ENCODE measurements at regions of chr1 and their contacts with region 1.

Region 1: DNA sequence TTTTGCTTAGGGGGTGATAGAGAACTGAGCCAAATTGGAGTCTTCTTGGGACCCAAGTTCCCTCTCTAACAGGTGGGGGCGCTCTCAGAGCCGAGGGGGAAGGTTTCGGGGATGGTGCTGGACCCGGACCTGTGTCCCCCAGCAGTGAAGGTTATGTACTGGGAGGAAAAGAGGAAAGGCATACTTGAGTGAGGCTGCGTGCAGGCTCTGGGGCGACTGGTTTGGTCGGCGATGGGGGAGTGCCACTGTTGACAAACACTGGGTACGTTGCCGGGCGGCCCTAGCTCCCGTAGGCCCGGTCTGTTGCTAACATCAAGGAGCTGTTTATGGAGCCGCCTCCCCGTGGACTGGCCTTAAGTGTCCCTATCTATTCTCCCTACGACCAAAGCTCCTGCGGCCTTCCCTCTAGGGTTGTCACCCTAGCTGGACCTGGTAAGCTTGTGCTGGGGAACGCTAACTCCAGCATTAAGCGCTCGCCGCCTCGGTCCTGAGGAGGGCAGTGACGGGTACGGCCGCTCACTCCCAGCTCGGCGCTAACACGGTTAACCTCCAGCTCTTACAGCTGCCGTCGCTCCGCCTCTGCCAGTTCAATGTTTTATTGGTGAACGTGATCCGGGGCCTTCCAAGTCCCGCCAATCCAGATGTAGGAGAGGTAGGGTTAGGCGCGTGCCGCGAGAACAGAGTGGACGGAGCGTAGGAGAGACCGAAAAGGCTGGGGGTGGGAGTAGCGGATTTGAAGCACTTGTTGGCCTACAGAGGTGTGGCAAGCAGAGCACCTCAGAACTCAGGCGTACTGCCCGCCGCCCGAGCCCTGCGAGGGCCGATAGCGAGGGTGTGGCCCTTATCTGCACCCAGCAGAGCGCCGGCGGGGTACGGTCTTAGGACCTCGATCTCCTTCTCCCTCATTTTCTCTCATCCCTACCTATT is at the start of gene PPOX:
- DNase-seq: peak; percentile 96
- H3K4me3 Mint-ChIP-seq: peak within 1 kb of the TSS; percentile 88
- H3K27ac Mint-ChIP-seq: peak within 1 kb of the TSS; percentile 94
- H3K4me1 Mint-ChIP-seq: peaks cover 49% of the 10 kb centered on the region
- H3K27me3 Mint-ChIP-seq: no peaks in the 10 kb centered on the region
- total RNA-seq, gene PPOX: 32.9 to 33.2 TPM

Region 2: DNA sequence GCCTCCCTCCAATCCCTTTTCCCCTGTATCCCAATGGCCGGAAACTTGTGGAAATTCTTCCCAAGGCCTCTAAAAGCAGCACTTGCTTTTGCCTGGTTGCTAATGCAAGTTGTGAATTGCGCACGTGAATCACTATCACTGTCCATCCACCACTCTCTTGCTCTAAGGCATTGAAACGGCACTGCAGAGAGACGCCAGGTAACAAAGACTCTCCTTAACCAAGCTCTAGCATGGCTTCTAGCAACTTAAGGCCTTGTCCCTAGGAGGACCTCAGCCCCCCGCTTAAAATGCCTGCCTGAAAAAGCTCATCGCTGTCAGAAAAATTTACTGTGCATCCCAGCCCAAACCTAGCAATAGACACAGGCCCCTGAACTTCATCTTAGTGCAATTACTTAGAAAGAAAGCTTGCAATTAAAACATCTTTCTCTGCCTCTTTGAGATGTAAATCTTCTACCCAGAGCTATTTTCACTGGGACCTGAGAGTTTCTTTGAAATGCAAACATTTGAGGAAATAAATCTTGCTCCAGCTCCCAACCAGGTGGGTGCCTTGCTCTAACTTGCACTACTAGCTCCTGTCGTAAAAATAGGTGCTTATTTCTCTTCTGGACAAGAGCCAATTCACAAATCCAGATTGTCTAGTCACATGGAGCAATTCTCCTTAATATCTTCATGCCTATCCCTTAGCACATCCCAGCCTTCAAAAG is 178.5 kb before region 1 on chr1:
- CTCF ChIA-PET with region 1: no interaction called
- POLR2A ChIA-PET with region 1: no interaction called
- DNase-seq: no peak
- H3K4me3 Mint-ChIP-seq: no peak overlapping the region
- H3K27ac Mint-ChIP-seq: no peak overlapping the region
- H3K4me1 Mint-ChIP-seq: peaks cover 7% of the 10 kb centered on the region
- H3K27me3 Mint-ChIP-seq: peaks cover 12% of the 10 kb centered on the region

Region 3: DNA sequence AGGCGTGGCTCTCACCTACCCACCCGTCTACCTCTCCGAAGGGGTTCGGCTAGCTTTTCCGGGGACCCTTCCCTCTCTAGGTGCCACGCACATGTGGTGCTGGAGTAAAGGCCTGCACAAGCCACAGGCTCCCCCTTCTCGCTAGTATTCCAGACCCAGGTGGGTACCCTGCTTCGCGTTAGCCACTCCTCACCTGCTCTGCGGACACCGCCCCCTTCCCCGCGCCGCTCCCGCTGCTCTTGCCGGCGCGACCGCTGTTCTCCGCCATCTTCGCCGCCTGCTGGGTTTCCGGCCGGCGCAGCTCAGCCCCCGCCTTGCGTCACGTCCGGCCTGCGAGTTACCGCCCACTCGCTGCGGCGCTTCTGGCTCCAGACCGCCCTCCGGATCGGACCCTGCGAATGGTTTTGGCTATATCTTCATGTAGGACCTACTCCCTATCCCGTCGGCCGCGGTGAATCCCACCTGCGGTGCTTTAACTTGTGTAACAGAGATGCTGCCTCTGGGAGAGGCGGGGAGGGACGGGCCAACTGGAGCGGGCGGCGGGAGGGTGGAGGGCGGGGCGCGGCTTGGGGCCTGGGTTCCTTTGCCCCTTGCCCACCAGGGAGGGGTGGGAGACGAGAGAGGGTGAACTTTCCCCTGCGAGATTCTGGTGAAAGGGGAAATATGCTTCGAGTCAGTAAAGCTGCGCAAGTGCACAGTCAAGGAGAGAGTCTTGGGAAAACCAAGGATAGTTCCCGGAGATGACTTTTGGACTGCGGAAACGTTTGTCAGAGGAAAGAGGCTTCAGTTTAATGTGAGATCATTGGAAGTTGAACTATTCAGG is 48.0 kb before region 1 on chr1 and contains the starts of genes NIT1 and PFDN2:
- CTCF ChIA-PET with region 1: interaction called, 3 read pairs
- POLR2A ChIA-PET with region 1: interaction called, 12 read pairs
- DNase-seq: peak; percentile 89
- H3K4me3 Mint-ChIP-seq: peak within 1 kb of the TSS; percentile 93
- H3K27ac Mint-ChIP-seq: peak within 1 kb of the TSS; percentile 95
- H3K4me1 Mint-ChIP-seq: peaks cover 66% of the 10 kb centered on the region
- H3K27me3 Mint-ChIP-seq: no peaks in the 10 kb centered on the region
- total RNA-seq, gene NIT1: 50.8 to 51.5 TPM
- total RNA-seq, gene PFDN2: 76.6 to 78.8 TPM

Region 4: GRCh38 chr1:161177112-161177935 is 11.3 kb after region 1 on chr1 and contains the start of gene B4GALT3:
- CTCF ChIA-PET with region 1: interaction called, 69 read pairs
- POLR2A ChIA-PET with region 1: interaction called, 69 read pairs
- DNase-seq: peak; percentile 94
- H3K4me3 Mint-ChIP-seq: peak within 1 kb of the TSS; percentile 97
- H3K27ac Mint-ChIP-seq: peak within 1 kb of the TSS; percentile 96
- H3K4me1 Mint-ChIP-seq: peaks cover 78% of the 10 kb centered on the region
- H3K27me3 Mint-ChIP-seq: no peaks in the 10 kb centered on the region
- total RNA-seq, gene B4GALT3: 55.0 to 56.7 TPM

Region 5: DNA sequence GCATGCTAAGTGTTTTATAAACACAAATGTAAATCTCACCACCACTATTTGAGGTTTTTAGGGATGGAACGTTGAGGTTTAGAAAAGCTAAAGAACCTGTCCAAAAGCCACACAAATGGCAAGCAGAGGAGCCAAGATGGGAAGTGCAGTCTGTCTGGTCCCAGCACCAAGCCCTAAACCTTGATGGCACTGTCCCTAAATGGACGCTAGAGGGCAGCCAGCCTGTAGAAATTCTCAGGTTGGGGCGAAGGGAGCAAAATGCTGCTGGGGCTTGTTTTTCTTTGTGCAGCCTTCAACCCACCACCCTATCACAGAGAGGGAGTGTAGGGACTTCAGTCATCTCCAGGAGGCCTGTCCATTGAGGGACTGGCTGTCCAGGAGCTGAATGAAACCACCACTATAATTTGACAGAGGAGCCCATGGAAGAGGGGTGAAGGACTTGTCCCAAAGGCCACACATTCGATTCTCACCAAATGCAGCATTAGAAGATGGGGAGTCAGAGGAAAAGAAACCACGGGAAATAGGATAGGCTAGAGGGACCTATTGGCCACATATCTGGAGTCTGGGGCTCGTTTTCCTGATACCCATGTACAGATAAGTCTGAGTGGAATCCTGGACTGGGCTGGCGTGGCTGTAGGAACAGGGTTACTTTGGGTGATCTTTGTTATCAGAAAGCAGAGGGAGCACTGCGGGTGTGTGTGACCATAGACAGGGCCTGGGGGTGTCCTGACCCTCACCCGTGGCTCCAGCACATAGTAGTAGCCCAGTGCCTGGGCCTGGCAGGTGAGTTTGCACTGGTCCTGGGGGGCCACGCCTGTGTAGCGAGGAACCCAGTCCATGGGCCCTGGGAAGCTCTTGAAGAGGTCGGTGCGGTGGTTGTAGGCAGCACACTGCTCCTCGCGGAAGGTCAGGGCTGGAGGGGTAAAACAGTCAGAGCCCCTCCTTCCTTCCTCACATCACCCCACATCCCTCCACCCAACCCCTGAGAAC is 26.8 kb after region 1 on chr1:
- CTCF ChIA-PET with region 1: interaction called, 19 read pairs
- POLR2A ChIA-PET with region 1: interaction called, 7 read pairs
- DNase-seq: peak; percentile 77
- H3K4me3 Mint-ChIP-seq: no peak overlapping the region
- H3K27ac Mint-ChIP-seq: peak overlapping the region; percentile 56
- H3K4me1 Mint-ChIP-seq: peaks cover 53% of the 10 kb centered on the region
- H3K27me3 Mint-ChIP-seq: no peaks in the 10 kb centered on the region

Region 6: GRCh38 chr1:161250829-161251228 is 84.8 kb after region 1 on chr1:
- CTCF ChIA-PET with region 1: no interaction called
- POLR2A ChIA-PET with region 1: no interaction called
- DNase-seq: no peak
- H3K4me3 Mint-ChIP-seq: no peak overlapping the region
- H3K27ac Mint-ChIP-seq: no peak overlapping the region
- H3K4me1 Mint-ChIP-seq: no peaks in the 10 kb centered on the region
- H3K27me3 Mint-ChIP-seq: peaks cover 16% of the 10 kb centered on the region

Region 7: GRCh38 chr1:161382214-161383019 is 216.4 kb after region 1 on chr1:
- CTCF ChIA-PET with region 1: interaction called, 18 read pairs
- POLR2A ChIA-PET with region 1: no interaction called
- DNase-seq: no peak
- H3K4me3 Mint-ChIP-seq: no peak overlapping the region
- H3K27ac Mint-ChIP-seq: no peak overlapping the region
- H3K4me1 Mint-ChIP-seq: peaks cover 18% of the 10 kb centered on the region
- H3K27me3 Mint-ChIP-seq: no peaks in the 10 kb centered on the region

Region 8: DNA sequence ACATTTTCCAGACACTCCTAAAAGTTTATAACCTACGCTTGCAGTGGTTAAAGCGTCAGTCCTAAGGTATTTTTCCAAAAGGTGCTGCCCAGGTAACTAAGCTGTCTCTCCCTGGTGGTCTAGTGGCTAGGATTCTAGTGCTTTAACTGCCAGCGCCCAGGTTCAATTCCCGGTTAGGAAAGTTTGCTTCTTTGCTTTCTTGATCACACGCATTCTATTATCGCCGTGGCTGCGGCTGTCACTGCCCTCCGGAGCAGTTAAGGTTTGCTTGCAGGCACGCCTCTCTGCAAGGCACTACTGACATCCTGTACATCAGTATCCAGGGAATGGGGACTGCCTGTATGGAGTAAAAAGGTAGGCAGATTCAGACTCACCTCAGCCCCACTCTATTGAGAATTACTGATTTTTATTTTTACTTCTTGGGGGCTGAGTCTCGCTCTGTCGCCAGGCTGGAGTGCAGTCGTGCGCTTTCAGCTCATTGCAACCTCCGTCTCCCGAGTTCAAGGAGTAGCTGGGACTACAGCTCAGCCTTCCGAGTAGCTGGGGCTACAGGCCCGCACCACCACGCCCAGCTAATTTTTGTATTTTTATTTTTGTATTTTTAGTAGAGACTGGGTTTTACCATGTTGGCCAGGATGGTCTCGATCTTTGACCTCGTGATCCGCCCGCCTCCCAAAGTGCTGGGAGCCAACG is 254.9 kb after region 1 on chr1:
- CTCF ChIA-PET with region 1: no interaction called
- POLR2A ChIA-PET with region 1: no interaction called
- DNase-seq: no peak
- H3K4me3 Mint-ChIP-seq: no peak overlapping the region
- H3K27ac Mint-ChIP-seq: no peak overlapping the region
- H3K4me1 Mint-ChIP-seq: peaks cover 17% of the 10 kb centered on the region
- H3K27me3 Mint-ChIP-seq: no peaks in the 10 kb centered on the region